HEK293T (cell line): ENCODE measurements at regions of chr12 and their contacts with region 1.

Region 1: DNA sequence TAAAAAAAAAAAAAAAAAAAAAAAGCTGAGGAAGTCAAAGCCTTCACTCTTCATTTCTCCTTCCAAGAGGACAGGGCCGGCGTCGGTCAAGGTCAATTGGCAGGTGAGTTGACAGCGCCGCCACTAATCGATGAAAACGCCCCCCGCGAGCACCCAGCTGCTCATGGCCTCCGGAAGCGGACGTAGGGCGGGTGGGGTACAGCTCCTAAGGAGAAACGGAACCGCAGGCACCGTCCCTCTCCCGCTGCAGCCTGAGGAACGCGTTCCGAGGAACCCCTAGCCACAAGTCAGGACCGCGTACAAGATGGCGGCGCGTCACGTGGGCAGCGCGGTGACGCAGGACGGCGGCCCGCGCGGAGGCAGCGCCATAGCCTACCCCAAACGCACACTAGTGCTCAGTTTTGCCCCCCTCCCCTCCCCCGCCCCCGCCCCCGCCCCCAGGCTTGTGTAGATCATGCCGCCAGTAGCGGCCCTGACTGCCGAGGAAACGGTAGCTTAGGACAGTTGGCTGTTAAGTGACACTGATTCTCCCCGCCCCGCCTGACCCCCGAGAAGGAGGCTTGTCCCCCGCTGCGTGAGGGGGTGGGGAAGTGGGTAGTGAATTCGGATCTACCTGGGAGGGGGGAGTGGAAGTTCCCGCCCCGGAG is at the start of gene ATF1:
- DNase-seq: peak; percentile 91

Region 2: GRCh38 chr12:50786498-50787231 is 22.9 kb after region 1 on chr12:
- CTCF ChIA-PET with region 1: no interaction called
- POLR2A ChIA-PET with region 1: interaction called, 14 read pairs
- DNase-seq: no peak

Region 3: GRCh38 chr12:51025836-51026638 is 262.3 kb after region 1 on chr12 and contains the start of gene SLC11A2:
- CTCF ChIA-PET with region 1: interaction called, 3 read pairs
- POLR2A ChIA-PET with region 1: interaction called, 12 read pairs
- DNase-seq: peak; percentile 94